ENCODE measurements at regions of chr12 and their contacts with region 1.

Region 1: DNA sequence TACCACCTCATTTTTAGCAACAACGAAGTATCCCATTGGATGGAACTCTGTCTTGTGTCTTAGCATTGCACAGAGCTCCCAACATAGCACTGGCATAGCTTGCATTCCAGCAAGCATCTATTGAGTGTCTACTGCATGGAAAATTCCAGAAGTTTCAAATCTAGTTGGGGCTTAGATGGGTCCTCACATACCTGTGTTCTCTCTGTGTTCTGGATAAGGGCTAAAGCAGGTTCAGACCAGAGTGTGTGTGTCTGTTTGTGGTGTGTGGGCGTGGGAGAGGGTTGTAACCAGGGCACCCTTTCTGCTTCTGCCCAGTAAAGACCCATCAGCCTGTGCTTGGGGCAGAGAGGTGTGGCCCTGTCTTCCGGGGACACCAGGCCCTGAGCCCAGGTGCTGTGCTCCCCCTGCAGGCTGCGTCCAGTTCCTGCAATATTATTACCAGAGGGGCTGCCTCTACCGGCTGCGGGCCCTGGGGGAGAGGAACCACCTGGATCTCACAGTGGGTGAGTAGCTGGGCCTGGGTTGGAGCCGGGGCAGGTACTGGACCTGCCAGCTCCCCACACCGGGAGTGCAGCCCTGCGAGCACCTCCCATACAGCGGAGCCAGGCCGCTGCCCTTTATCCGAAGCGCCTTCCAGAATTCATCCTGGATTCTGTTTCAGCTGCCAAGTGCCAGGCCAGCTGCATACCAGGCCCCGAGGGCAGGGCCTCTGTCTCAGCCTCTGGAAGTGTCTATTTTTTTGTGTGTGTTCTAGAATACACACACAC is 20.3 kb downstream of the RHOF start:
- DNase-seq: peak; percentile 79 to 91
- H3K4me3 ChIP-seq: no peak overlapping the region
- H3K27ac ChIP-seq: peak overlapping the region in 2 of 5 donors; percentile 40 to 61
- H3K4me1 ChIP-seq: peaks cover 8 to 34% (median 18%) of the 10 kb centered on the region in 4 donors
- H3K27me3 ChIP-seq: no peaks in the 10 kb centered on the region
- CTCF ChIP-seq: peak in 5 of 7 experiments; percentile 57 to 90 (median 85)
- EP300 ChIP-seq: no peak
- POLR2A ChIP-seq: no peak

Region 2: GRCh38 chr12:121649819-121650353 is 123.3 kb before region 1 on chr12:
- intact Hi-C with region 1: no loop called
- DNase-seq: no peak
- H3K4me3 ChIP-seq: no peak overlapping the region
- H3K27ac ChIP-seq: no peak overlapping the region
- H3K4me1 ChIP-seq: peaks cover 0 to 18% (median 8%) of the 10 kb centered on the region in 4 donors
- H3K27me3 ChIP-seq: no peaks in the 10 kb centered on the region
- CTCF ChIP-seq: no peak
- EP300 ChIP-seq: no peak
- POLR2A ChIP-seq: no peak

Region 3: DNA sequence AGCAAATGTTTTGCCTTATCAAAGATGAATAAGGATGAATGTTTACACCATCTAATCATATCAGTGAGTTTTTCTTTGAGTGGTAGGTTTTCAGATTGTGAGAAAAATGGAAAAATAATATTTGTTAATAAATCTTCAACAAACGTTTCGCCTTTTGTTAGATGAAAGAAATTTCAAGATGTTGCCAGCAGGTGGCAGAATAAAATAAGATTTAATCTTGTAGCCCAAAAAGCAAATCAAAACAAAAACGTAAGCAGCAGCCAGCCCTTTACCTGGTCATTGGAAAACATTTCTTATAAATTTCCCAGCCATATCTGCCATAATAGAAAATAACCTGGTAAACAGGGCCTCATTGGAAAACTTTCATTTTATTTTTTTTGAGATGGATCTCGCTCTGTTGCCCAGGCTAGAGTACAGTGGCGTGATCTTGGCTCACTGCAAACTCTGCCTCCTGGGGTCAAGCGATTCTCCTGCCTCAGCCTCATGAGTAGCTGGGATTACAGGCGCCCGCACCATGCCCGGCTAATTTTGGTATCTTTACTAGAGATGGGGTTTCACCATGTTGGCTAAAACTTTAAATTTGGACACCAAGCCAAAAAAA is 76.0 kb before region 1 on chr12:
- intact Hi-C with region 1: loop called (anchors 5 kb)
- DNase-seq: peak in 1 of 2 donors; percentile 76
- H3K4me3 ChIP-seq: no peak overlapping the region
- H3K27ac ChIP-seq: no peak overlapping the region
- H3K4me1 ChIP-seq: peaks cover 6 to 18% (median 14%) of the 10 kb centered on the region in 4 donors
- H3K27me3 ChIP-seq: no peaks in the 10 kb centered on the region
- CTCF ChIP-seq: peak in 5 of 7 experiments; percentile 34 to 80 (median 43)
- EP300 ChIP-seq: no peak
- POLR2A ChIP-seq: no peak

Region 4: GRCh38 chr12:121811434-121812319 is 38.5 kb after region 1 on chr12:
- intact Hi-C with region 1: loop called (anchors 5 kb)
- DNase-seq: peak; percentile 77 to 92
- H3K4me3 ChIP-seq: peak overlapping the region; percentile 60 to 75 (median 70)
- H3K27ac ChIP-seq: peak overlapping the region; percentile 66 to 84 (median 83)
- H3K4me1 ChIP-seq: peaks cover 43 to 77% (median 61%) of the 10 kb centered on the region in 4 donors
- H3K27me3 ChIP-seq: no peaks in the 10 kb centered on the region
- CTCF ChIP-seq: peak in 5 of 7 experiments; percentile 72 to 100 (median 98)
- EP300 ChIP-seq: no peak
- POLR2A ChIP-seq: no peak

Measured in stomach (tissue), 19 donors.